ENCODE measurements at regions of chr3 and their contacts with region 1.

Region 1: DNA sequence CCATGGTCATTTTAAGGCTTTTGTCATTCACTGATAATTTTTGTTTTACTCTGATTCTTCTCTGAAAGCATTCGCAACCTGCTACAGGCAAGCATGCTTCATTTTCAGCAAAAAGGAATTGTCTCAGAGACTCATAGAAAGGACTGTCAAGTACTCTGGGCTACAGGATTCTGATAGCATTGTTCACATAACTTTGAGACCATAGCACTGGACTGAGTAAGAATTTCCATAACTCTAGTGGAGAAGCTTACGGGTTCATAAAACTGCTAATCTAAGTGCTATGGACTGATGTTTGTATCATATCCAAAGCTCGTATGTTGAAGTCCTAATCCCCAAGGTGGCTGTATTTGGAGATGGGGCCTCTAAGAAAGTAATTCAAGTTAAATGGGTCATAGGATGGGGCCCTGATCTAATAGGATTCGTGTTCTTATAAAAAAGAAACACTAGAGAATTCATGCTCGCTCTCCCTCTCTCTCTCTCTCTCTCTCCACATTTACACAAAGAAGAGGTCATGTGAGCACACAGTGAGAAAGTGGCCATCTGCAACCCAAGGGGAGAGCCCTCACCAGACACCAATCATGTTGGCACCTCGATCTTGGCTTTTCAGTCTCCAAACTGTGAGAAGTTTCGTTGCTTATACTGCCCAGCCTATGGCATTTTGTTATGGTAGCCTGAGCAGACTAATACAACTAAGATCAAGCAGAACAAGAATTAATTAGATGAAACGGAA is 60.4 kb downstream of the CRYGS start:
- DNase-seq: no peak
- ATAC-seq: no peak
- H3K4me3 ChIP-seq: no peak overlapping the region
- H3K27ac ChIP-seq: no peak overlapping the region
- H3K4me1 ChIP-seq: no peaks in the 10 kb centered on the region
- H3K27me3 ChIP-seq: no peaks in the 10 kb centered on the region
- CTCF ChIP-seq: no peak
- EP300 ChIP-seq: no peak
- POLR2A ChIP-seq: no peak
- RAD21 ChIP-seq: no peak

Region 2: GRCh38 chr3:187490366-187490765 is 1006.6 kb after region 1 on chr3:
- CTCF ChIA-PET with region 1: no interaction called
- POLR2A ChIA-PET with region 1: no interaction called
- in situ Hi-C with region 1: no loop called
- intact Hi-C with region 1: loop called (anchors 5 kb)
- DNase-seq: no peak
- ATAC-seq: no peak
- H3K4me3 ChIP-seq: no peak overlapping the region
- H3K27ac ChIP-seq: no peak overlapping the region
- H3K4me1 ChIP-seq: no peaks in the 10 kb centered on the region
- H3K27me3 ChIP-seq: no peaks in the 10 kb centered on the region
- CTCF ChIP-seq: no peak
- EP300 ChIP-seq: no peak
- POLR2A ChIP-seq: no peak
- RAD21 ChIP-seq: no peak